PC-3 (cell line): ENCODE measurements at regions of chr6 and their contacts with region 1.

Region 1: DNA sequence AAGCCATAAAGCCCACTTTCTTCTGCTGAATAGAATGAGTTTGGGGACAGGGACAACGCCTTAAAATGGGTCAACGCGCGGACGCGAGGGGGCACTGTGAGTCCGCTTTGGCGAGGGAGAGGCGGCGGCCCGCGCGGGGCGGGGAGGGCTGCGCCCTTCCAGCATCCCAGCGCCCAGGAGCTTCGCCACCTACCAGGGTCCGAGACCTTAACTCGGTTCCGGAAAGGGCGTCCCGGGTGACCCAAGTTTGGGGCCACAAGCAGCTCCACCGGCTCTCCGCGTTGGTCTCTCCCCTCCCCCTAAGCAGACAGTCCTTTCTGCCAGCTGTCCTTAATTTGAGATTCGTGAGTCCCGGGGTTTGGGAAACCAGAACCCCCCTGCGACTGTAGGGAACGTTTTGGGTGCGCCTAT is 1.8 kb upstream of the SAMD5 start:
- DNase-seq: peak; percentile 64
- ATAC-seq: peak; percentile 48
- H3K4me3 ChIP-seq: peak overlapping the region; percentile 95
- H3K27ac ChIP-seq: no peak overlapping the region
- H3K4me1 ChIP-seq: peaks cover 13% of the 10 kb centered on the region; the same call in 1 of the 2 replicates
- H3K27me3 ChIP-seq: no peaks in the 10 kb centered on the region
- CTCF ChIP-seq: peak; percentile 81

Region 2: DNA sequence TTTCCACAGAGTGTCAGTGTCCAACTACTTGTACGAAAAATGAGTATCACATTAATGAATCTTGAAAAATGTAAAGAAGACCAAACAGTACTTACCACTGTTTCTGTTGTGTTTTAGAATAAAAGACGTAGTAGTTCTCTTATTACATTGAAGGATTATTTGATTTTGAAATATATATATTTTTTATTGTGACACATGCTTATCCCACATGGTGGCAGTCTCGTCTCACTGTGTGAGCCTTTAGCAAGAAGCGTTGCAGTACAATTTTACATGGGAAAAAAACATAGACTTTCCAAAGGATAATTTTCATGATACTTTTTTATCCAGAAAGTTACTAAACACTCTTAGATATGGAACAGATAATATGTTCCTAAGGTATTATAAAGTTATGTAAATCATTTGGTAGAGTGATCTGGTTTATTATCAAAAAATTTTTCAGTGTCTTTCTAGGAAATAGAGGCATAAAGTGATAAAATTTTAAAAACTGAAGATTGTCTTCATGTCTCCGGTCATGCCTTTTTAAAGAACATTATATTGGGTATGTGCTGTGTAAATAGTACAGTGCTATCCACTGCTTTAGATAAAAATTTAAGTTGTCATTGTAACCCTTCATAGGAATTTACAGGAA is 115.7 kb before region 1 on chr6:
- CTCF ChIA-PET with region 1: no interaction called
- POLR2A ChIA-PET with region 1: no interaction called
- intact Hi-C with region 1: loop called (anchors 2 kb)
- DNase-seq: peak; percentile 39
- ATAC-seq: no peak
- H3K4me3 ChIP-seq: no peak overlapping the region
- H3K27ac ChIP-seq: no peak overlapping the region
- H3K4me1 ChIP-seq: no peaks in the 10 kb centered on the region
- H3K27me3 ChIP-seq: no peaks in the 10 kb centered on the region
- CTCF ChIP-seq: peak; percentile 55

Region 3: DNA sequence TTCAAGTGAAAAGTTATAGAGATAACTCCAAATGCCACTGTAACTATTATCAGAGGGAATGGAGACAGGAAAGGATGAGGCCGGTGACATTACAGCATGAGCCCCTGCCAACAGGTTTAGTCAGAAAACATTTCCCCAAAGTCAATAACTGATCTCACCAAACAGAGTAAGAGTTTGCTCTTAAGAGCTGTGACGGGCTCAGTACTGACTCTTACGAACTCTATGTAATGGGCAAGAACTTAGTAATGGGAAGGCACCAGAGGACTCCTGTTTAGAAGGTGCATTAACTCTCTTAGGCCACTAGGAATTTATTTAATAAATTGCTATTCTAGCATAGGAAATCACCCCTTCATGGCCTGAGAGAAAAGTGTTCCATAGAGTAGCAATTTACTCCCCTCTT is 78.5 kb after region 1 on chr6:
- CTCF ChIA-PET with region 1: interaction called, 21 read pairs
- POLR2A ChIA-PET with region 1: no interaction called
- intact Hi-C with region 1: no loop called
- DNase-seq: peak; percentile 40
- ATAC-seq: peak; percentile 82
- H3K4me3 ChIP-seq: no peak overlapping the region
- H3K27ac ChIP-seq: no peak overlapping the region
- H3K4me1 ChIP-seq: peaks cover 10% of the 10 kb centered on the region
- H3K27me3 ChIP-seq: no peaks in the 10 kb centered on the region
- CTCF ChIP-seq: 0 out of 2 replicates have a peak, but pooled peaks have one; percentile 13

Region 4: GRCh38 chr6:147782302-147782701 is 275.6 kb after region 1 on chr6:
- CTCF ChIA-PET with region 1: interaction called, 6 read pairs
- POLR2A ChIA-PET with region 1: no interaction called
- intact Hi-C with region 1: loop called (anchors 10 kb)
- DNase-seq: peak; percentile 39
- ATAC-seq: peak; percentile 67
- H3K4me3 ChIP-seq: no peak overlapping the region
- H3K27ac ChIP-seq: no peak overlapping the region
- H3K4me1 ChIP-seq: no peaks in the 10 kb centered on the region
- H3K27me3 ChIP-seq: no peaks in the 10 kb centered on the region
- CTCF ChIP-seq: no peak

Region 5: GRCh38 chr6:148144917-148145521 is 638.3 kb after region 1 on chr6:
- CTCF ChIA-PET with region 1: no interaction called
- POLR2A ChIA-PET with region 1: no interaction called
- intact Hi-C with region 1: loop called (anchors 2 kb)
- DNase-seq: peak; percentile 75
- ATAC-seq: no peak
- H3K4me3 ChIP-seq: peak overlapping the region; percentile 50; the same call in 1 of the 2 replicates
- H3K27ac ChIP-seq: no peak overlapping the region
- H3K4me1 ChIP-seq: peaks cover 32% of the 10 kb centered on the region
- H3K27me3 ChIP-seq: no peaks in the 10 kb centered on the region
- CTCF ChIP-seq: peak; percentile 80

Region 6: GRCh38 chr6:148464319-148465010 is 957.8 kb after region 1 on chr6:
- CTCF ChIA-PET with region 1: no interaction called
- POLR2A ChIA-PET with region 1: no interaction called
- intact Hi-C with region 1: loop called (anchors 1 kb)
- DNase-seq: peak; percentile 79
- ATAC-seq: peak; percentile 70
- H3K4me3 ChIP-seq: no peak overlapping the region
- H3K27ac ChIP-seq: no peak overlapping the region
- H3K4me1 ChIP-seq: peaks cover 3% of the 10 kb centered on the region; the same call in 1 of the 2 replicates
- H3K27me3 ChIP-seq: no peaks in the 10 kb centered on the region
- CTCF ChIP-seq: peak; percentile 91